Endothelial cell of umbilical vein (primary cell): ENCODE measurements at regions of chr1 and their contacts with region 1.

Region 1: DNA sequence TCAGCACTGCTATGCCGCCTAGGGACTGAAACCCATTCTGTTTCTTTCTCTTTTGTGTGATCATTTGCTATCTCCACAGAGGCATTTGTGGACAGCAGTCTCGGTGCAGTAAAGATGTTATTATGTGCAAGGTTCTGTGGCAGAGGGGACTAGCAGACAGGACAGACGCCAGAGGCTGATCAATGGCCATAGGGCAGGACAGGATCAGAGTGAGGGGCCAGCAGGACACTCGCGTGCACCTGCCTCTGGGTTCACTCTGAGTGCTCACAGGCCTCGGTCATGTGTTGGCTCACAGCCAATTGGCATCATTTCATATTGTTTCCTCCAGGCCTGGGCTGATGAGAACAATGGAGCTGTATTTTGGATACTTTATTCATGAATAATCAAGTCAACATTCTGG is 212.6 kb downstream of the TGFB2 start:
- DNase-seq: peak; percentile 96
- H3K4me3 ChIP-seq: no peak overlapping the region
- H3K27ac ChIP-seq: peak overlapping the region; percentile 65
- H3K4me1 ChIP-seq: peaks cover 13% of the 10 kb centered on the region
- H3K27me3 ChIP-seq: no peaks in the 10 kb centered on the region
- CTCF ChIP-seq: no peak
- POLR2A ChIP-seq: no peak

Region 2: DNA sequence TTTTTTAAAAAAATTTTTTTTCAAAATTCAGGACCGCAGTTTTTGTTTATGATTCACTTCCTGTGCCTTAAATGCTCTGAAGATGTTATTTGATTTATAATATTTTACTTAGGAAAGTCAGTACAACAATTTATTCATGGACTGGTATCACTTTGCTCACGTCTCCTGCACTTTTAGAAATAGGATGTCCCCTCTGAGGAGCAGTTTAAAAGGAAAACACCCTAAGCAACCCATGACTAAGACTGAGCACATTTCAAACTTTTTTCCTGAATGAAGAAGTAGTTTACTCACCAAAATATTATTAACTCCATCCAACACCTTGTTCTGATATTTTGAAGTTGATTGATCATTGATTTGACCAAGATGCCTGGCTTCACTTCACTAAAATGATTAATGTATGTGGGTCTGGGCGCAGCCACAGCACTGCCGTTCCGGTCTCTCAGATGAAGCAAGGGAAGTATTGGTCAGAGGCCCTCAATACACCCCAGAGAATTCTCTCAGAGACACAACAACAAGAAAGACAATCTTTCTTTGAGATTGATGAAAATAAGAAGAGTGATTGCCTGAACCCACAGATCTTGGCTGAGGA is 11.3 kb after region 1 on chr1:
- CTCF ChIA-PET with region 1: interaction called, 3 read pairs
- POLR2A ChIA-PET with region 1: no interaction called
- dilution Hi-C with region 1: no loop called
- intact Hi-C with region 1: loop called (anchors 1 kb)
- DNase-seq: peak; percentile 10
- H3K4me3 ChIP-seq: no peak overlapping the region
- H3K27ac ChIP-seq: no peak overlapping the region
- H3K4me1 ChIP-seq: peaks cover 6% of the 10 kb centered on the region
- H3K27me3 ChIP-seq: no peaks in the 10 kb centered on the region
- CTCF ChIP-seq: no peak
- POLR2A ChIP-seq: no peak